B cell (primary cell): ENCODE measurements at regions of chr6 and their contacts with region 1.

Region 1: DNA sequence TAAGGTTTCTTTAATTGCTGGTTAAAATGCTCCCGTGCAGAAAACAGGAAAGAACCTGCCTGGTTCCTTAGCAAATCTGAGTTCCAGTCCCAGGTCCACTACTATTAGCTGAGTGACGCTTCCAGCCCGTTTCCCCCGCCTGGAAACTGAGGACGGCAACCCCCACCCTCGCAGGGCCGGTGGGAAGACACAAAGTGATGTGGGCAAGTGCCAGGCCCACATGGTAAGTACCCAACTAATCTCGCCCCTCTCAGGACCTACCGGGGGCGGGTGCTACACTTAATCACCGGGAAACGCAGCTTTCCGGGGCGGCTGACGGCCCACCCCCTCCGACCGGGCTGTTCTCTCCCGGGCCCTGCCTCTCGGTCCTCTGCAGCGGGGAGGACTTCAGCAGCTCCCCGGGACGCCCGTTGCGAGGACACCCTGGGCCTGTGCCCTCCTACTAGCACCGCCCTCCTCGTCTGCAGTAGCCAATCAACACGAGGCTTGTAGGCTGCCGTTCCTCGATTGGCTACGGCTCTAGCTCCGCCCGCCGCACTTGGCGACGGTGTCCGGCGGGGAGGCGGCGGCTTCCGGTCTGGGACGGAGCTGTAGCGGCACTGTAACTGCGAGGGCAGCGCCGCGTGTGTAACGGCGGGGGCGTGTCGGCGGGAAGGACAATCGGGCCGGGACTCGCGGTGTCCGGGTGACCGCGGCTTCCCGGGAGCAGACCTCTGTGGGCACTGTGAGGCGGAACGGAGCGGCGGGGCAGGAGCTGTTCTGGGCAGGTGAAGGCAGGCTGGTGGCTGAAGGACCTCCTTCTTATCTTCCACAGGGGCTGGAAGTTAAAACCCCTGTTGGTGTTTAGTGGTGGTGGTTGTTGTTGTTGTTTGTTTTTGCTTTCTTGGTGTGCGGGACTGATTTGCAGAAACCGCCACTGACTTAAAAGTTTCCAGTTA is at the start of gene ZBTB9:
- DNase-seq: peak; percentile 94
- ATAC-seq: peak; percentile 100
- H3K4me3 ChIP-seq: peak within 1 kb of the TSS; percentile 77 to 94 (median 81)
- H3K4me3 Mint-ChIP-seq: peak within 1 kb of the TSS; percentile 99
- H3K27ac ChIP-seq: peak within 1 kb of the TSS; percentile 57 to 84
- H3K27ac Mint-ChIP-seq: peak within 1 kb of the TSS; percentile 93
- H3K4me1 ChIP-seq: peaks cover 12 to 21% of the 10 kb centered on the region in 2 donors
- H3K4me1 Mint-ChIP-seq: peaks cover 32% of the 10 kb centered on the region
- H3K27me3 ChIP-seq: no peaks in the 10 kb centered on the region
- H3K27me3 Mint-ChIP-seq: no peaks in the 10 kb centered on the region
- CTCF ChIP-seq: no peak
- total RNA-seq, gene ZBTB9: 10.4 and 11.8 TPM in 2 replicates

Region 2: DNA sequence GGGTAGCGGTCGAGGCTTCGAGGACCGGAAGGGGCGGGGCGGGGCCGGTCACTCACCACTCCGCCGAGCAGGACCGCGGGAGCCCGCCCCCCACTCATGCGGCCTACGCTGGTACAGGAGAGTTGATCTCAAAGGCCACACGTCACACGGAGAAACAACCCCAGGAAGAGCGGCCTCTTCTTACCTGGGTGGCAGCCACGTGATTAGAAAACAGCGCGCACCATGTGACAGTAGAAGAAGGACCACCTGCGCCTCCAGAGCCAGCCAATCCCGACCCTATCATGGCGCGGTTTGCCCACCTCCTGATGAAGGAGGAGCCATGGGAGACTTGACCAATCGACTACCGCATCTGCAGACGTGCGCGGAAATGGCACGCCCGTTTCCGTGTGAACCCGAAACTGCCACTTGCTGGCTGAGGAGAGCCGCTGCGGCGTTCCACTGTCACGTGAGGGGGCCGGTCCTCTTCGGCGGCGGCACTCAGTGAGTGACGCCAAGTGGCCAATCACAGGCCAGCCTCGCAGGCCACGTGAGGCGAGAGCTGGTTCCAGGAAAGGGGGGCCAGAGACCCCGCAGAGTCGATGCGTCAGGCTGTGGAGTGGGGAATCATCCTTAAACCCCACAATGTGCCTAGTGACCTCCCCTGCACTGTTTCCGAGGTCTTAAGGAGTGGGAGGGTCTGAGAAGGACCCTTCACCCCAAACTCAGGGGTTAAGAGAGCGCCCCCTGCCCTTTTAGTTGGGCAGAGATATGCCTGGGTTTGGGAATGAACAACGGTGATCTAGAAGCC is 36.2 kb before region 1 on chr6 and contains the start of gene CUTA:
- CTCF ChIA-PET with region 1: interaction called, 8 read pairs
- POLR2A ChIA-PET with region 1: interaction called, 3 read pairs
- intact Hi-C with region 1: loop called (anchors 1 kb)
- DNase-seq: peak; percentile 100
- ATAC-seq: peak; percentile 89
- H3K4me3 ChIP-seq: peak within 1 kb of the TSS; percentile 58 to 84 (median 69)
- H3K4me3 Mint-ChIP-seq: peak within 1 kb of the TSS; percentile 96
- H3K27ac ChIP-seq: peak within 1 kb of the TSS; percentile 89 to 93
- H3K27ac Mint-ChIP-seq: peak within 1 kb of the TSS; percentile 97
- H3K4me1 ChIP-seq: peaks cover 40 to 65% of the 10 kb centered on the region in 2 donors
- H3K4me1 Mint-ChIP-seq: peaks cover 63% of the 10 kb centered on the region
- H3K27me3 ChIP-seq: peaks cover 0 to 3% (median 0%) of the 10 kb centered on the region in 4 experiments
- H3K27me3 Mint-ChIP-seq: peaks cover 4% of the 10 kb centered on the region
- CTCF ChIP-seq: peak; percentile 28
- total RNA-seq, gene CUTA: 134 and 137 TPM in 2 replicates

Region 3: GRCh38 chr6:33430991-33431879 is 23.0 kb before region 1 on chr6:
- CTCF ChIA-PET with region 1: interaction called, 5 read pairs
- POLR2A ChIA-PET with region 1: no interaction called
- intact Hi-C with region 1: loop called (anchors 1 kb)
- DNase-seq: peak; percentile 86
- ATAC-seq: peak; percentile 53
- H3K4me3 ChIP-seq: peak overlapping the region; percentile 41 to 72 (median 50)
- H3K4me3 Mint-ChIP-seq: peak overlapping the region; percentile 96
- H3K27ac ChIP-seq: peak overlapping the region; percentile 56 to 75
- H3K27ac Mint-ChIP-seq: peak overlapping the region; percentile 96
- H3K4me1 ChIP-seq: peaks cover 67 to 74% of the 10 kb centered on the region in 2 donors
- H3K4me1 Mint-ChIP-seq: peaks cover 74% of the 10 kb centered on the region
- H3K27me3 ChIP-seq: no peaks in the 10 kb centered on the region
- H3K27me3 Mint-ChIP-seq: no peaks in the 10 kb centered on the region
- CTCF ChIP-seq: no peak

Region 4: GRCh38 chr6:33483678-33484077 is 29.4 kb after region 1 on chr6:
- CTCF ChIA-PET with region 1: no interaction called
- POLR2A ChIA-PET with region 1: no interaction called
- intact Hi-C with region 1: no loop called
- DNase-seq: no peak
- ATAC-seq: no peak
- H3K4me3 ChIP-seq: no peak overlapping the region
- H3K4me3 Mint-ChIP-seq: no peak overlapping the region
- H3K27ac ChIP-seq: no peak overlapping the region
- H3K27ac Mint-ChIP-seq: no peak overlapping the region
- H3K4me1 ChIP-seq: no peaks in the 10 kb centered on the region
- H3K4me1 Mint-ChIP-seq: no peaks in the 10 kb centered on the region
- H3K27me3 ChIP-seq: no peaks in the 10 kb centered on the region
- H3K27me3 Mint-ChIP-seq: peaks cover 12% of the 10 kb centered on the region
- CTCF ChIP-seq: no peak

Region 5: GRCh38 chr6:33579828-33580714 is 125.8 kb after region 1 on chr6 and contains the start of gene BAK1:
- CTCF ChIA-PET with region 1: interaction called, 4 read pairs
- POLR2A ChIA-PET with region 1: no interaction called
- intact Hi-C with region 1: loop called (anchors 1 kb)
- DNase-seq: peak; percentile 89
- ATAC-seq: peak; percentile 98
- H3K4me3 ChIP-seq: peak within 1 kb of the TSS; percentile 65 to 87 (median 71)
- H3K4me3 Mint-ChIP-seq: peak within 1 kb of the TSS; percentile 95
- H3K27ac ChIP-seq: peak within 1 kb of the TSS; percentile 73 to 89
- H3K27ac Mint-ChIP-seq: peak within 1 kb of the TSS; percentile 95
- H3K4me1 ChIP-seq: peaks cover 23 to 39% of the 10 kb centered on the region in 2 donors
- H3K4me1 Mint-ChIP-seq: peaks cover 35% of the 10 kb centered on the region
- H3K27me3 ChIP-seq: no peaks in the 10 kb centered on the region
- H3K27me3 Mint-ChIP-seq: no peaks in the 10 kb centered on the region
- CTCF ChIP-seq: peak; percentile 56
- total RNA-seq, gene BAK1: 22.6 and 23.3 TPM in 2 replicates

Region 6: GRCh38 chr6:34301408-34301807 is 847.1 kb after region 1 on chr6:
- CTCF ChIA-PET with region 1: no interaction called
- POLR2A ChIA-PET with region 1: no interaction called
- intact Hi-C with region 1: no loop called
- DNase-seq: no peak
- ATAC-seq: no peak
- H3K4me3 ChIP-seq: no peak overlapping the region
- H3K4me3 Mint-ChIP-seq: no peak overlapping the region
- H3K27ac ChIP-seq: peak overlapping the region in 1 of 2 donors; percentile 57
- H3K27ac Mint-ChIP-seq: peak overlapping the region; percentile 41
- H3K4me1 ChIP-seq: peaks cover 28 to 34% of the 10 kb centered on the region in 2 donors
- H3K4me1 Mint-ChIP-seq: peaks cover 40% of the 10 kb centered on the region
- H3K27me3 ChIP-seq: no peaks in the 10 kb centered on the region
- H3K27me3 Mint-ChIP-seq: no peaks in the 10 kb centered on the region
- CTCF ChIP-seq: no peak